H1 (cell line): ENCODE measurements at regions of chr6 and their contacts with region 1.

Region 1: GRCh38 chr6:97215157-97215769 is 67.8 kb downstream of the MMS22L start:
- DNase-seq: peak in 1 of 2 experiments; percentile 7
- H3K4me3 ChIP-seq: no peak overlapping the region
- H3K27ac ChIP-seq: no peak overlapping the region
- H3K4me1 ChIP-seq: peaks cover 0 to 4% (median 0%) of the 10 kb centered on the region in 4 experiments; a peak in 1 of 7 replicates
- H3K27me3 ChIP-seq: no peaks in the 10 kb centered on the region
- CTCF ChIP-seq: peak; percentile 42 to 61 (median 47)
- EP300 ChIP-seq: no peak
- POLR2A ChIP-seq: no peak
- RAD21 ChIP-seq: peak; percentile 56 to 70

Region 2: GRCh38 chr6:97133067-97133466 is 82.2 kb before region 1 on chr6:
- CTCF ChIA-PET with region 1: no interaction called
- POLR2A ChIA-PET with region 1: no interaction called
- DNase-seq: no peak
- H3K4me3 ChIP-seq: no peak overlapping the region
- H3K27ac ChIP-seq: no peak overlapping the region
- H3K4me1 ChIP-seq: no peaks in the 10 kb centered on the region
- H3K27me3 ChIP-seq: no peaks in the 10 kb centered on the region
- CTCF ChIP-seq: no peak
- EP300 ChIP-seq: no peak
- POLR2A ChIP-seq: no peak
- RAD21 ChIP-seq: no peak

Region 3: GRCh38 chr6:97195117-97195516 is 20.1 kb before region 1 on chr6:
- CTCF ChIA-PET with region 1: interaction called, 24 read pairs
- POLR2A ChIA-PET with region 1: interaction called, 4 read pairs
- DNase-seq: no peak
- H3K4me3 ChIP-seq: no peak overlapping the region
- H3K27ac ChIP-seq: no peak overlapping the region
- H3K4me1 ChIP-seq: no peaks in the 10 kb centered on the region
- H3K27me3 ChIP-seq: no peaks in the 10 kb centered on the region
- CTCF ChIP-seq: no peak
- EP300 ChIP-seq: no peak
- POLR2A ChIP-seq: no peak
- RAD21 ChIP-seq: no peak

Region 4: DNA sequence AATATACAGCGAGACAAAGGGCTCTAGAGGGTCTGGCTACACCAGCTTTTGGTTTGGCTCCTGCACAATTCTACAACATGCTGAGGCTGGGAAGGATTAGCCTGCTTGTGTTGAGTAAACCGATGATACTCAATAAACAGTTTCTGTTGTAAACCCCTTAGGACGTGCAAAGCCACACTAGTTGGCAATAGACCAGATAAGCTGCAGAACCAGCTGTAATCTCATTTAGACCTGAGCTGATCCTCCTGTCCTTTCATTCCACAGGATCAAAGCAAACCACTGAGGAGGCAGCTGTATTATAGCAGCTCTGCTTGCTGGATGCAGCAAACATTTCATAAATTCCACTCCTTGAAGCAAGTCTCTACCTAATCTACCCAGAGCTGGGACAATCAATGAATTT is 11.9 kb before region 1 on chr6:
- CTCF ChIA-PET with region 1: interaction called, 27 read pairs
- POLR2A ChIA-PET with region 1: no interaction called
- DNase-seq: no peak
- H3K4me3 ChIP-seq: no peak overlapping the region
- H3K27ac ChIP-seq: no peak overlapping the region
- H3K4me1 ChIP-seq: peaks cover 0 to 3% (median 0%) of the 10 kb centered on the region in 4 experiments; a peak in 2 of 7 replicates
- H3K27me3 ChIP-seq: no peaks in the 10 kb centered on the region
- CTCF ChIP-seq: no peak
- EP300 ChIP-seq: no peak
- POLR2A ChIP-seq: no peak
- RAD21 ChIP-seq: no peak

Region 5: GRCh38 chr6:97394160-97394748 is 179.0 kb after region 1 on chr6:
- CTCF ChIA-PET with region 1: interaction called, 13 read pairs
- POLR2A ChIA-PET with region 1: no interaction called
- DNase-seq: no peak
- H3K4me3 ChIP-seq: no peak overlapping the region
- H3K27ac ChIP-seq: no peak overlapping the region
- H3K4me1 ChIP-seq: no peaks in the 10 kb centered on the region
- H3K27me3 ChIP-seq: no peaks in the 10 kb centered on the region
- CTCF ChIP-seq: peak in 2 of 3 experiments; percentile 83; a peak in 3 of 4 replicates
- EP300 ChIP-seq: no peak
- POLR2A ChIP-seq: no peak
- RAD21 ChIP-seq: peak; percentile 95